Activated T-helper 2 cell treated with anti-CD3 and anti-CD28 coated beads, Interferon-gamma antibody, Interleukin-2, Interleukin-4, amounts not matched to agents 10 μg/mL and 5 μg/mL and 100 μg/mL, durations not matched to agents 14 hours and 24 hours and 36 hours (primary cell): ENCODE measurements at regions of chr6 and their contacts with region 1.

Region 1: GRCh38 chr6:144215932-144216667 is 65.8 kb downstream of the STX11 start:
- DNase-seq: peak; percentile 90
- H3K4me3 Mint-ChIP-seq: peak overlapping the region; percentile 89
- H3K27ac Mint-ChIP-seq: peak overlapping the region; percentile 98
- H3K4me1 Mint-ChIP-seq: peaks cover 28% of the 10 kb centered on the region
- H3K27me3 Mint-ChIP-seq: peaks cover under 1% of the 10 kb centered on the region

Region 2: DNA sequence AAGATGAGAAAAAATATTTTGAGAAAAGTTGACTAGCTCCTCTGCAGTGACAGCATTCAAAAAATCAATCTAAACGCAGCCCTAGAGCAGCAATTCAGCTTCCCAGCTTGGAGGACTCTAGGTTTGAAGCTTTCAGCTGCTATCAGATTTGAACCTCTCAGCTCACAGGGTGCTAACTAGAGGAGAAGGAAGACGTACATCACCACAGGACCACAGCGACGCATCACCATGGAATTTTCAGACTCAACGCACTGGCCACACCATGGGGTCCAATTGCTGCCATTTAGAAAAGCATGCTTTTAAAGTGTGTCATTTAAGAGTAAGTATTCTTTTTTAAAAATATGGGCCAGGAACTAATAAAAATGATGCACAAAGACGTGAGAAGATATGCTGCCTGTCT is 659.6 kb before region 1 on chr6:
- intact Hi-C with region 1: loop called (anchors 10 kb)
- DNase-seq: no peak
- H3K4me3 Mint-ChIP-seq: no peak overlapping the region
- H3K27ac Mint-ChIP-seq: peak overlapping the region; percentile 80
- H3K4me1 Mint-ChIP-seq: peaks cover 73% of the 10 kb centered on the region
- H3K27me3 Mint-ChIP-seq: no peaks in the 10 kb centered on the region

Region 3: DNA sequence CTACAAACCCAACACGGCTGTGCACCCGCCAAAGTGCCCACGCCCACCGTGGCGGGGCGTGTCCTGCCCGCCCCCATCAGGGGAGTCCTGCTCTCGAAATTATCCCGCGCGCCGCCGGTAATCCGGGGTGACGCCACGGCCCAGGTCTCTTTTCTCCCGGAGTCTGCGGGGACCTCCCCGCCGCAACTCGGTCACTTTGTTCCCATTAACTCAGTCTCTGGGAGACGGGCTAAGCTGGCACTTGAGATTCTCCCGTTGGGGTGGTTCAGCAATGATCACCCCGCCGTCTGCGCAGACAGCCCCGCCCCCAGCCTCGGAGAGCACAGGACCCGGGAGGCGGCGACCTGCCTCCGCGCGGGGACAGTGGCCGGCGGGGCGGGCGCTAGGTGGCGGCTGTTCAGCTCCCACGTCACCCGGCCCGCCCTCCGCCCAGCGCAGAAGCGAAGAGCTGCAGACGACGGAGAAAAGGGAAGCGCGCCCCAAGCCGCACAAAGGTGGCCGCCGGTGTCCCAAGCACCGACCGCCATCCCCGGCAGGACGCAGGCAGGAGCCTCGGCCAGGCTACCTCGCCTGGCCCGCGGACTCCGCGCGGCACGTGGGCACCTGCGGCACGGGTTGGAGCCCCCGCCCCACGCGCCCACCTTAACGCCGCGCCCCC is 152.2 kb before region 1 on chr6:
- intact Hi-C with region 1: loop called (anchors 1 kb)
- DNase-seq: peak; percentile 89
- H3K4me3 Mint-ChIP-seq: peak overlapping the region; percentile 87
- H3K27ac Mint-ChIP-seq: peak overlapping the region; percentile 89
- H3K4me1 Mint-ChIP-seq: peaks cover 43% of the 10 kb centered on the region
- H3K27me3 Mint-ChIP-seq: no peaks in the 10 kb centered on the region

Region 4: DNA sequence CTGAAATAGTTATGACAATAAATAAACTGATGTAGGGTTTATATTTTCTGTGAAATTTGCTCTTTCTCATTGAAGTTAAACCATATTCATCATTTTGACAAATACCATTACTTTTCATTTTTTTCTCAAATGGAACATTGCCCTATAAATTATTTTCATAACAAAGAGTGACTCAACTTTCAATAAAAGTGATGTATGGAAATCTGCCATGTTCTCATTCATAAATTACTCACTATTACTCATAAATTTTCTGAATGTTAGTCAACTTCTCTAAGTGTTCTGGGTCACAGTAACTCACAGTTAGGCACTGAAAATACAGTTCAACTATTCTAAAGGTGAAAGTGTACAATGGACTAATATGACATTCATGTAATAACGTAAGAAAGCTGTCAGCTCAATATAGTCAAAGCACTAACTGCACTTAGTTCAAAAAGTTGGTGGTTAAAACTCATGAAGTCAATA is 84.8 kb before region 1 on chr6:
- intact Hi-C with region 1: loop called (anchors 1 kb)
- DNase-seq: no peak
- H3K4me3 Mint-ChIP-seq: peak overlapping the region; percentile 19
- H3K27ac Mint-ChIP-seq: peak overlapping the region; percentile 84
- H3K4me1 Mint-ChIP-seq: peaks cover 29% of the 10 kb centered on the region
- H3K27me3 Mint-ChIP-seq: peaks cover 4% of the 10 kb centered on the region

Region 5: DNA sequence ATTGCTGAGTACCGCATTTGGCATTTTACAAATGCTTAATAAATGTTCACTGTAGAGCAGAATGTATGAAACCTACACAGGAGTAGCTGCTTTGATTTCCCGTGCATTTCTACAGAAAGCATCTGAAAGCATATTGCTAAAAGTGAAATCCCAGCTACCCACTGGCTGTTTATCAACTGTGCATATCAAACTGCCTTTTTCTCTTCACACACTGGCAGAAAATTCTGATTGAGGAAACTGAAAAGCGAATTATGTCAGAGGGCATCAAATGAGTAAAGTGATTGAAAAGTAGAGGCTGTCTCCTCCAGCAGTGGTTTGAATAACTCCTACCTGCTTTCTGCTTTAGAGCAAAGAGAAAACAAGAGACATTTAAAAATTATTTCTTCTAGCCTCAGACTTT is 37.8 kb before region 1 on chr6:
- intact Hi-C with region 1: loop called (anchors 1 kb)
- DNase-seq: no peak
- H3K4me3 Mint-ChIP-seq: no peak overlapping the region
- H3K27ac Mint-ChIP-seq: no peak overlapping the region
- H3K4me1 Mint-ChIP-seq: peaks cover 64% of the 10 kb centered on the region
- H3K27me3 Mint-ChIP-seq: no peaks in the 10 kb centered on the region

Region 6: GRCh38 chr6:144349690-144350527 is 133.8 kb after region 1 on chr6:
- intact Hi-C with region 1: loop called (anchors 5 kb)
- DNase-seq: no peak
- H3K4me3 Mint-ChIP-seq: peak overlapping the region; percentile 80
- H3K27ac Mint-ChIP-seq: peak overlapping the region; percentile 95
- H3K4me1 Mint-ChIP-seq: peaks cover 74% of the 10 kb centered on the region
- H3K27me3 Mint-ChIP-seq: no peaks in the 10 kb centered on the region